PC-9 (cell line): ENCODE measurements at regions of chr9 and their contacts with region 1.

Region 1: DNA sequence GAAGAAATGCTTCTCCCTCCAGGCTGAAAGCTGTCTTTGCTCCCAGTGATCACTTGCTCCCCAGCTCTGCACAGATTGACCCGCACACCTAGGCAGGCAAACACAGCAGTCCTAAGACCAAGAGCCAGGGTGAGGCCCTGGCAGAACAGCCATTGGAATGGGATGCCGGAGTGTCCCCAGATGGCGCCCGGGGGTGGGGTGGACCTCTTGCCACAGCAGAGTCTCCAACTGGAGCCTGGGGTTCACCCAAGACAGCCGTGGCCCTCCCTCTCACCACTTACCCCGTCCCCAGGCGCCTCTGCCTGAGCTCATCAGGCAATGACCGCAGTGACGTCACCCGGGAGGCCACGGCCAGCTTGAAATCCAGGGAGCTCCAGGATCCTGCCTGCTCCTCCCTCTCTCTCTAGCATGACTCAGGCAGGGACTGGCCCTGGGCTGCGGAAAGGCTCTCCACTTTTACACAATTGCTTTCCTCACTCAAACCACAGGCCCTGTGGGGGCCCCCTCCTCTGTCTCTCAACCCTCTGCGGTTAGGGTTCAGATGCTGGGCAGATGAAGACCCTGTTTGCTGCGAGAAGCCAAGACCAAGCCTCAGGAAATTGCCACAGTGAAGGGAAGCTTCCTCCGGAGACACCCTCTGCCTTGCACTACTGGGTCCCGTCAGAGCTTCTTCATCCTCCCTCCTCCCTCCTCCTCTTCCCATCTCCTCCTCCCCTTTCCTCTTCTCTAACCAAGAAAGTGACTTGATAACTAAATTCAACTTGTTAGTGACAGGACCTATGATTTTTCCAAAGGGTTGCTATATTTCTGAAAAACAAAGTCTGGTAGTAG is 24.3 kb upstream of the PTGES start:
- DNase-seq: peak; percentile 96 to 98
- H3K4me3 ChIP-seq: peak overlapping the region; percentile 23; the same call in 1 of the 2 replicates
- H3K27ac ChIP-seq: peak overlapping the region; percentile 71
- H3K4me1 ChIP-seq: peaks cover 84% of the 10 kb centered on the region
- H3K27me3 ChIP-seq: no peaks in the 10 kb centered on the region
- CTCF ChIP-seq: no peak

Region 2: DNA sequence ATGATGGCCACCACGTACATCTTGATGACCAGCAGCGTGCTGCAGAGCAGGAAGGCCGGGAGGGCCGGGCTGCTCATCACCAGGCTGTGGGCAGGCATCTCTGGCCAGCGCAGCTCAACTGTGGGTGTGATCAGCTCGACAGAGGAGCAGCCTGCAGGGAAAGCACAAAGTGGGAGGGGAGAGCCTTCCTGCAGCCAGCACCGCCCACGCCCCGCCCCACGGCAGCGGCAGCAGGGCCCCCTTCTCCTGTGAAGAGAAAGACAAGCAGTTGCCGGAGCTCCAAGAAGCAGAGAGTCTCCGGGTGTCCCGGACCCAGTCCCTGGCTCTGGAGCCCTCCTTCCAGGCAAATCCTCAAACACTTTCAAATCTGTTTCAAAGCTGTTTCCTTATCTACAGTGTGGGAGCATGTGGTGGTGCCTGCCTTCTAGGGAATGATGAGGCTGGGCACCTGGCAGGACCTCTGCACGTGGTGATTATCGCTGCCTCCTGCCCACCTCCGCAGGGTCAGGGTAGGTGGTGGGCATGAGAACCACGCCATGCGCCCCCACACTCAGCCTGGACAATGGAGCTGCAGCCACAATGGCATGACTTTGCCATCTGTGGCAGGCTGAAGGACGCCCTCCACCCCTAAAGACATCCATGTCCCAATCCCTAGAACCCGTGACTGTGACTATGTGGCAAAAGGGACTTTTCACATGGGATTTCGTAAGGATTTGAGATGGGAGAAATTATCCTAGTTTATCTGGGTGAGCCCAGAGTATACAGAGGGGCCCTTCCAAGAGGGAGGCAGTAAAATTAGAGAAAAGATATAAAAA is 24.0 kb before region 1 on chr9 and contains the start of gene PTGES:
- CTCF ChIA-PET with region 1: interaction called, 18 read pairs
- POLR2A ChIA-PET with region 1: interaction called, 28 read pairs
- intact Hi-C with region 1: loop called (anchors 1 kb)
- DNase-seq: peak; percentile 84 to 94
- H3K4me3 ChIP-seq: peak within 1 kb of the TSS; percentile 85
- H3K27ac ChIP-seq: peak within 1 kb of the TSS; percentile 94
- H3K4me1 ChIP-seq: peaks cover 61% of the 10 kb centered on the region
- H3K27me3 ChIP-seq: no peaks in the 10 kb centered on the region
- CTCF ChIP-seq: no peak
- total RNA-seq, gene PTGES: 116 and 119 TPM in 2 replicates

Region 3: DNA sequence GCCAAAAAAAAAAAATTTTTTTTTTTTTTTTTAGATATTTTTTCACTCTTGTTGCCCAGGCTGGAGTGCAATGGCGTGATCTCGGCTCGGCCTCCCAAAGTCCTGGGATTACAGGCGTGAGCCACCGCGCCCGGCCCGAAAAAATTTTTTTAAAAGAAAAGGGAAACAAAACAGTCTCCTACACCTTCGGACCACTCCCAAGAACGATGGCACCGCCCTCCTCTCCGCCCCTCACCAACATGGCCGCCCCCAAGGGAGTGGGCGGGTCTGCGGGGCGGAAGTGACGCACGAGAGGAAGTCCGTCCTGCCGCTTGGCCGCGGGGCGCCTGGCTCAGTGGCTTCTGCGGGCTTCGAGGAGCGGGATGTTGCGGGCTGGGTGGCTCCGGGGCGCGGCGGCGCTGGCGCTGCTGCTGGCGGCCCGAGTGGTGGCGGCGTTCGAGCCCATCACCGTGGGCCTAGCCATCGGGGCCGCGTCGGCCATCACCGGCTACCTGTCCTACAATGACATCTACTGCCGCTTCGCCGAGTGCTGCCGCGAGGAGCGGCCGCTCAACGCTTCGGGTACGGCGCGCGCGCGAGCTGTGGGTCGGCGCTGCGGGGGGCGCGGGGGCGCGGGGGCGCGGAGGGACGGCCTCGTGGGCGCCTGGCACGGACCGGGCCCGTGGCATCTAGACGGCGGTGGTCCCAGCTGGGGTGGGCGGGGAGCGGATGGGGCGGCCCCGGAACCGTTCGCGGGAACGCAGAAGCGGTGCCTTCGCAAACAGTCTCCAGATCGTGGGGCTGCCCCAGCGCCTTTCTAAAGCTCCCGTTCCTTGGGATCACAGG is 25.9 kb after region 1 on chr9 and contains the start of gene TOR1B:
- CTCF ChIA-PET with region 1: no interaction called
- POLR2A ChIA-PET with region 1: no interaction called
- intact Hi-C with region 1: no loop called
- DNase-seq: peak; percentile 90 to 98
- H3K4me3 ChIP-seq: peak within 1 kb of the TSS; percentile 93
- H3K27ac ChIP-seq: peak within 1 kb of the TSS; percentile 27; the same call in 1 of the 2 replicates
- H3K4me1 ChIP-seq: peaks cover 7% of the 10 kb centered on the region
- H3K27me3 ChIP-seq: no peaks in the 10 kb centered on the region
- CTCF ChIP-seq: no peak
- total RNA-seq, gene TOR1B: 26.5 and 30.5 TPM in 2 replicates

Region 4: DNA sequence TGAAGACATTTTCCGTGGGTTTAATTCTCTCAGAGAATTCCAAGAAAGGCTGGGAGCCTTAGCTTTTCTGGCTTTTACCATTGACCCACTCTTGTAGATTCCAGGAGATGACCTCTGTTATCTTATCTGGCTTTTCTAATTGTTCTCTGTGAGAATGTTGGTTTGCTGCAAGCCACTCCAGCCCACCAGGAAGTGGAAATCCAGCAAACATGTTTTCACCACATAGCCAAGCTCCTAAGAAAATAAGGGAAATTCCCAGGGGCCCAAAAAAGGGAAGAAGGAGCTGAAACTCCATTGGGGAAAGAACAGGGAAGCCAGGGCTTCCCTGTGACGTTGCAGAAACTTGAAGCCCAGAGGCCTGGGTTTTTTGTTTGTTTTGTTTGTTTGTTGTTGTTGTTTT is 296.2 kb after region 1 on chr9:
- CTCF ChIA-PET with region 1: no interaction called
- POLR2A ChIA-PET with region 1: interaction called, 21 read pairs
- intact Hi-C with region 1: no loop called
- DNase-seq: no peak
- H3K4me3 ChIP-seq: no peak overlapping the region
- H3K27ac ChIP-seq: no peak overlapping the region
- H3K4me1 ChIP-seq: peaks cover 5% of the 10 kb centered on the region; the same call in 1 of the 2 replicates
- H3K27me3 ChIP-seq: no peaks in the 10 kb centered on the region
- CTCF ChIP-seq: no peak